HEK293 (cell line): ENCODE measurements at regions of chr19 and their contacts with region 1.

Region 1: DNA sequence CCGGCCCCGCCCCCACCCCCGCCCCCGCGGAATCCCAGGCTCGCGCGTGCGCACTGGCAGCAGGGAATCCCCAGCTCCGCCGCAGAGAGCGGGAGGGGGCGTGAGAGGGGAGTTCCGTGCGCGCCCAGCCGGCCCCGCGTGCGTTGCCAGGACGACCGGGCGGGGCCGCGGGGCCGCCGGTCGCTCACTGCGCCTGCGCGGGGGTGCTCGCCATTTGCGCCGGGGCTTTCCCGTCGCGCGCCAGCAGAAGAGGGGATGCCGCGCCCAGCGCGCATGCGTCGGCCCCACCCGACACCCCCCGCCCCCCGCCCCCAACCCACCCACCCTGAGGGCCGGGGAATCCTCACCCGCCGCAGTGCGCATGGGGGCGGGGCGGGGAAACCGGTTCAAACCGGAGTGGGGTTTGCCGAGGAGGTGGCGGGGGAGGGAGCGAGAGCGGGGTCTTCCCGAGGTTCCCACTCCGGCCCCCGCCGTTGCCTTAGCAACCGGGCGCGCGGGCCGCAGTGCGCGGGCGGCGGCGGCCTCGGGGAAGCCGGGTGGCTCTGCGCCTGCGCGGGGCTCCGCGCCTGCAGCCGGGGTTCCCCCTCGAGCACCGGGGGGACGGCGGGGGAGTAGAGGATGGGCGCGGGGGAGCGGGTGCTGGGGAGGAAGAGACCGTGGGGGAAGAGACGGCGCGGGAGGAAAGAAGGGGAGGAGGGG is 15.1 kb downstream of the CCDC124 start:
- H3K4me3 ChIP-seq: peak overlapping the region; percentile 43
- H3K27ac ChIP-seq: no peak overlapping the region
- H3K4me1 ChIP-seq: peaks cover 6% of the 10 kb centered on the region; the same call in 1 of the 2 replicates
- CTCF ChIP-seq: no peak

Region 2: GRCh38 chr19:17915951-17916593 is 31.9 kb before region 1 on chr19:
- CTCF ChIA-PET with region 1: no interaction called
- POLR2A ChIA-PET with region 1: no interaction called
- H3K4me3 ChIP-seq: no peak overlapping the region
- H3K27ac ChIP-seq: no peak overlapping the region
- H3K4me1 ChIP-seq: 0 out of 2 replicates have a peak, but pooled peaks cover 6% of the 10 kb centered on the region
- CTCF ChIP-seq: no peak

Region 3: DNA sequence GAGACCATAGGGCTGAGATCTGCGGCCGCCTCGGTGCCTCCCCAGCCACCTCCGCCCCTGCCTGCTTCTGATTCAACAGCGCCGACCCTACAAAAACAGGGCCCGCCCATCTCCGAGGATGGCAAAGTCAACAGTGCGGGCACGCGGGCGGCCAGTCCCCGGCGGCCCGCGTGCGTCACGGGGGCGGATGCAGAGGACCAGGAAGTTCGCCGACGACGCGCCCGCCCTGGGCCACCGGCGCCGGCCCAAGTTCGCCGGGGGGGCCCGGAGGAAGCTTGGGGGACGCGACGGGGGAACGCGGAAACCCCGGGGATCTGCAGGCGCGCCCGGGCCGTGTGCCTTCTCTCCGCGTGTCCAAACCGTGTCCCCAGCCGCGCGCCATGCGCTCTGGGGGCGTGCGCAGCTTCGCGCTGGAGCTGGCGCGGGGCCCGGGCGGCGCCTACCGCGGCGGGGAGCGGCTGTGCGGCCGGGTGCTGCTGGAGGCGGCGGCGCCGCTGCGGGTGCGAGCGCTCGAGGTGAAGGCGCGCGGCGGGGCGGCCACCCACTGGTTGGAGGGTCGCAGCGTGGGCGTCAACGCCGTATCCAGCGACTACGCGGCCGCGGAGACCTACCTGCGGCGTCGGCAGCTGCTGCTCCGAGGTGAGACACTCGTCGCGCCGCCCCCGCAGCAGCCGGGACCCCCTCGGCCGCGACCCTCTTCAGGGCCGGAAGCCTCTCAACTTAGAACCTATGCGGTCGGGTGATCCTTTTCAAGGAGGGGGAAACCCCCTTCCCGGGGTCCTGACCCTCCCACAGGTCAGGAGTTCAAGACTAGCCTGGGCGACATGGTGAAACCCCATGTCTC is 53.2 kb after region 1 on chr19:
- CTCF ChIA-PET with region 1: interaction called, 92 read pairs
- POLR2A ChIA-PET with region 1: interaction called, 5 read pairs
- H3K4me3 ChIP-seq: peak overlapping the region; percentile 47
- H3K27ac ChIP-seq: no peak overlapping the region; the same call in 1 of the 2 replicates
- H3K4me1 ChIP-seq: no peaks in the 10 kb centered on the region
- CTCF ChIP-seq: no peak